GM18951 (cell line): ENCODE measurements at regions of chr19 and their contacts with region 1.

Region 1: GRCh38 chr19:50173140-50173539 is 10.1 kb upstream of the IZUMO2 start:
- POLR2A ChIP-seq: no peak

Region 2: GRCh38 chr19:50266896-50267295 is 93.8 kb after region 1 on chr19:
- in situ Hi-C with region 1: loop called (anchors 10 kb)
- POLR2A ChIP-seq: no peak

Region 3: DNA sequence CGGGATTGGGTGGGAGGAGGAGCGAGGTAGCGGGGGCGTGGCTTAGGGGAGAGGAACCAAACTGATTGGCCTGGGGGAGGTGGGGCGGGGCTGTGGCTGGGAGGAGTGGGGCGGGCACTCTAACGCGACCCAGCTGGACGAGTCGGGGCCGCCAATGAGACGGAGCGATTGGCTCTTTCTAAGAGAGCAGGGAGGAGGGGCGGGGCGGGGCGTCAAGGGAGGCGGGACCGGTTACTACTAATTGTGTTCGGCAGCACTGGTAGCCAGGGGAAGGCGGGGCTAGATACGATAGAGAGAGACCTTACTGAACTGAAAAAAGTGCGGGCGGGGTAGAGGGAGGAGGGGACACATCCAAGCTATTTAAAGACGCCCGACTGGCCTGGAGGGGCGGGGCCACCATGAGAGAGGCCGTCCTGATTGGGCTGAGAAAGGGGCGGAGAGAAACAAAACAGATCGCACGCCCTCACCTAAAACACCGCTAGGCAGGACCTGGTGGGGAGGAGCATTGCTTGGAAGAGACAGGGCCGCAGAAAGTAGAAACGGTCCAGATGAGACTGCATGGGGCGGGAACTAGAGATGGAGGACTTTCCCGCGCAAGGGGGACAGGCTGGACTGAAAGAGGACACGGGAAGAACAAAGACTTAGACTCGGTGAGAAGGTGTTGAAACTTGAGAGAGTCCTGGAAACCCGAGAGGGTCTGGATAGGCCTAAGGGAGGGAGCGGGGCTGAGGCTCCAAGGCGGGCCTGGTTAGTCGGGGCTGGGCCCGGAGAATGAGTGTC is 156.2 kb after region 1 on chr19 and contains the start of gene KCNC3:
- in situ Hi-C with region 1: no loop called
- POLR2A ChIP-seq: no peak